ENCODE measurements at regions of chr5 and their contacts with region 1.

Region 1: DNA sequence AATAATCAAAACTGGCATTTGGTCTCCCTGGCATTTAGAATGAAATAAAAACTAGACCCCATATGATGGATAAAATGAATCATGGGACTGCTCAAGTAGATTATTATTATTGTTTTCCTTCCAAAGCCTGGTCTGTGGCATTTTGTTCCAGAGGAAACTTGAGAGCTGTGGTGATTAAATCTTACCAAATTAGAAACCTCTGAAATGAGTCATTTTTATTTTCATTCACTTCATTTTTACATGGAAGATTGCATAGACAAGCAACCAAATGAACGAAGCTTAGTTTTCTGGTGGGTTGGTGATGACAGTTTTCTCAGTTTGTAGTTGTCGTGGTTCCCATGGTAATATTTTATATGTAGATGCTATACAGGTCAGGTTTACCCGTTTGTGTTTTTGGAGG is 23.4 kb downstream of the PAM start:
- DNase-seq: no peak
- H3K4me3 Mint-ChIP-seq: peak overlapping the region; percentile 23
- H3K27ac Mint-ChIP-seq: peak overlapping the region; percentile 86
- H3K4me1 Mint-ChIP-seq: peaks cover 56% of the 10 kb centered on the region
- H3K27me3 Mint-ChIP-seq: no peaks in the 10 kb centered on the region

Region 2: GRCh38 chr5:102591650-102592049 is 186.8 kb before region 1 on chr5:
- intact Hi-C with region 1: loop called (anchors 2 kb)
- DNase-seq: no peak
- H3K4me3 Mint-ChIP-seq: no peak overlapping the region
- H3K27ac Mint-ChIP-seq: peak overlapping the region; percentile 4
- H3K4me1 Mint-ChIP-seq: peaks cover 15% of the 10 kb centered on the region
- H3K27me3 Mint-ChIP-seq: peaks cover 7% of the 10 kb centered on the region

Region 3: DNA sequence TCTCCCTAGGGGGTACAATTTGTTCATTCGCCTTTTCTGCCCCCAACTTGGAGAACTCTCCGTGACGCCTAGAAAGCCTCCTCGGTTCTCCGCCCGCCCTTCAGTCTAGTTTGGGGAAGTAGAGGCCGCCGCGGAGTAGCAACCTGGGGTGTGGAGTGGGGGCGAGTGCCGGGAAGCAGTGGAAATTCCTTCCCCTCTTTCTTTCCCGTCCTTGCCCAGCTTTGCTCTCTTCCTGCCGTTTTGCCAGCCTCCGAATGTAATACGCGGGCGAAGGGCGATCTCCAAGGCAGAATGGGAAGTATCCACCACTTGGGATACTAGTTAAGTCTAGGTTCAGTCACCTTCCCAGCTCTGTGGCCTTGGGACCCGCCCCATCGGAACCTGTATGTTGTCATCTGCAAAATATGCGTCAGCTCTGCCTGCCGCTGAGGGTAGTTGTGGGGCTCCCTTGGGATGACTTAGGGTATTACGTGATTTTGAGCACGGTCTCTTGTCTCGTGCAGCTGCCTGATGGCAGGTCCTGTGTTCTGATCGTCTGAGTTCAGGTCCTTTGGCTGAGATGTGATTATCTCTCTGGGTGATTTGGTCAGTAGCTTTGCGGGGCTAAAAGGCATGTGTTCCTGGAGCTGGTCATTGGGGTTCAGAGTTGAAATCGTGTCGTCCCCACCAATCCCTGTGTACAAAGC is 22.6 kb before region 1 on chr5:
- intact Hi-C with region 1: loop called (anchors 1 kb)
- DNase-seq: peak; percentile 49
- H3K4me3 Mint-ChIP-seq: peak overlapping the region; percentile 98
- H3K27ac Mint-ChIP-seq: peak overlapping the region; percentile 95
- H3K4me1 Mint-ChIP-seq: peaks cover 39% of the 10 kb centered on the region
- H3K27me3 Mint-ChIP-seq: peaks cover 12% of the 10 kb centered on the region

Region 4: GRCh38 chr5:102961671-102962070 is 183.2 kb after region 1 on chr5:
- intact Hi-C with region 1: loop called (anchors 10 kb)
- DNase-seq: no peak
- H3K4me3 Mint-ChIP-seq: no peak overlapping the region
- H3K27ac Mint-ChIP-seq: no peak overlapping the region
- H3K4me1 Mint-ChIP-seq: peaks cover 9% of the 10 kb centered on the region
- H3K27me3 Mint-ChIP-seq: no peaks in the 10 kb centered on the region

Region 5: GRCh38 chr5:103119765-103120606 is 341.5 kb after region 1 on chr5 and contains the starts of genes GIN1 and PPIP5K2:
- intact Hi-C with region 1: loop called (anchors 1 kb)
- DNase-seq: peak; percentile 96
- H3K4me3 Mint-ChIP-seq: peak within 1 kb of the TSS; percentile 95
- H3K27ac Mint-ChIP-seq: peak within 1 kb of the TSS; percentile 99
- H3K4me1 Mint-ChIP-seq: peaks cover 44% of the 10 kb centered on the region
- H3K27me3 Mint-ChIP-seq: no peaks in the 10 kb centered on the region
- total RNA-seq, gene GIN1: 7.0 and 8.8 TPM in 2 replicates
- total RNA-seq, gene PPIP5K2: 44.1 and 52.5 TPM in 2 replicates

Measured in activated T-helper 2 cell treated with anti-CD3 and anti-CD28 coated beads, Interferon-gamma antibody, Interleukin-2, Interleukin-4, amounts not matched to agents 10 μg/mL and 5 μg/mL and 100 μg/mL, durations not matched to agents 14 hours and 24 hours and 36 hours (primary cell).